RWPE1 (cell line): ENCODE measurements at regions of chr16 and their contacts with region 1.

Region 1: GRCh38 chr16:68328151-68328859 is 17.5 kb downstream of the PRMT7 start:
- DNase-seq: peak; percentile 85
- H3K27ac ChIP-seq: no peak overlapping the region
- CTCF ChIP-seq: peak; percentile 92

Region 2: GRCh38 chr16:68257906-68258800 is 70.2 kb before region 1 on chr16:
- CTCF ChIA-PET with region 1: interaction called, 76 read pairs
- POLR2A ChIA-PET with region 1: no interaction called
- DNase-seq: no peak
- H3K27ac ChIP-seq: peak overlapping the region; percentile 72
- CTCF ChIP-seq: no peak

Region 3: DNA sequence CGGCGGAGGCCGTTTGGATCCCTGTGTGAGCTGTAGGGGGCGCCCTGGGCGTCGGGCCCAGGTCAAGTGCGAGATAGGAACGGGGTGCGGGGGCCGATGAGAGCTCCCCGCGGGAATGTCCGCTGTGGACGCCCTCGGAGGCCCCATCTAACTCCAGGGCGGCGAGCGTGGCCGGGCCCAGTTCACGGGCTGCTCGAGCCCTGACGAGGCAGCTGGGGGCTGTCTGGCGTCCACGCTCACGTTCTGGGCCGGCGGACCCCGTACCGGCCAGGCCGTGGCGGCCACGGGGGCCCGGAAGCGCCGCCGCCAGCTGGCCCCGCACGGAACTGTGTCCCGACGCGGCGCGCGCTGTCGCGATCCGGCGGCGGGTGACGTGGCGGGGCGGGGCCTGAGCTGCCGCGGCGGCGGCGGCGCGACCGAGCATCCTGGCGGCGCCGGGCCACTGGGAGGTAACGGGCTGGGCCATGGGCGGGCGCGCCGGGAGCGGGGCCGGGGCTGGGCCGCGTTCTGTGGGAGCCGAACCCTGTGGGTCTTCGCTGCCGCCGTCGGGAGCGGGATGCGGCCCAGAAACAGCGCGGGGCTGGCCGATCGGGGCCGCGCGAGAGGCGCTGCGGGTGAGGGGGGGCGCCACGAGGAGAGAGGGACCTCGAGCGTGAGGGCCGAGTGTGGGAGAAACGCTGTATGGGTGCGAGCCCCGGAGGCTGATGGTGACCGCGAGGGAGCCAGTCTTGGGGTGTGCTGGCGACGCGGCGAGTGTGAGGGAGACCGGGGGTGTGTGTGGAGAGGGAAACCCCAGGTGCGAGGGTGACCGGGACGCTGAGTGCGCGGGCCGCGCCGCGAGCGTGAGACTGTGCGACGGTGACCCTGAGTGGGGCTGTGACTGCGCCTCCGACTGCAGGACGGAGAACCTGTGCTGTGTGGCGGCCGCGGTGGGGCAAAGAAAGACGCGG is 63.9 kb before region 1 on chr16 and contains the start of gene SLC7A6:
- CTCF ChIA-PET with region 1: interaction called, 76 read pairs
- POLR2A ChIA-PET with region 1: interaction called, 3 read pairs
- DNase-seq: peak; percentile 62
- H3K27ac ChIP-seq: peak within 1 kb of the TSS; percentile 98
- CTCF ChIP-seq: peak; percentile 75

Region 4: DNA sequence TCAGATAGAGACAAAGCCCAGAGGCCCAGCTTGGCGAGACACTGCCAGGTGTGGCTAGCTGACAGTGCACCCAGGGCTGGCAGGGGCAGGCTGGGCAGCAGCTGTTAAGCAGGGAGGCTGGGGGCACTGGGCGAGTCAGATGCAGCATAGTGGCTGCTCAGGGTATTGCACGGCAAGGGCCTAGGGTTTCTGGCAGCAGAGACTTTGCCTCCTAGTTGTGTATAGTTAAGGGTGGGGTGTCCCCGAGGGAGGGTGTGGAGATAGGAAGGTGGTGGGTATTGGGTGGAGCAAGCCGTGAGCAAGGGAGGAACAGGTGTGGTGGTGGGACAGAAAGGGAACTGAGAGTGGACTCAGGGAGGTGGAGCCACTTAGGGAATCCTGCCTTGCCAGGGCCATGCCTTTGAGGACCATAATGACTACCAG is 54.0 kb after region 1 on chr16:
- CTCF ChIA-PET with region 1: no interaction called
- POLR2A ChIA-PET with region 1: no interaction called
- DNase-seq: no peak
- H3K27ac ChIP-seq: no peak overlapping the region
- CTCF ChIP-seq: no peak